Activated CD4-positive, alpha-beta memory T cell treated with anti-CD3 and anti-CD28 coated beads, Interleukin-2, amount 10 ng/mL, durations not matched to agents 7 days and 5 days (primary cell): ENCODE measurements at regions of chr14 and their contacts with region 1.

Region 1: GRCh38 chr14:76784266-76785264 is 23.3 kb downstream of the VASH1 start:
- DNase-seq: peak; percentile 62
- H3K4me3 Mint-ChIP-seq: no peak overlapping the region
- H3K27ac Mint-ChIP-seq: no peak overlapping the region
- H3K4me1 Mint-ChIP-seq: peaks cover 34% of the 10 kb centered on the region
- H3K27me3 Mint-ChIP-seq: no peaks in the 10 kb centered on the region

Region 2: GRCh38 chr14:76710056-76711010 is 74.2 kb before region 1 on chr14:
- CTCF ChIA-PET with region 1: interaction called, 60 read pairs
- POLR2A ChIA-PET with region 1: no interaction called
- DNase-seq: no peak
- H3K4me3 Mint-ChIP-seq: no peak overlapping the region
- H3K27ac Mint-ChIP-seq: no peak overlapping the region
- H3K4me1 Mint-ChIP-seq: no peaks in the 10 kb centered on the region
- H3K27me3 Mint-ChIP-seq: peaks cover 6% of the 10 kb centered on the region

Region 3: DNA sequence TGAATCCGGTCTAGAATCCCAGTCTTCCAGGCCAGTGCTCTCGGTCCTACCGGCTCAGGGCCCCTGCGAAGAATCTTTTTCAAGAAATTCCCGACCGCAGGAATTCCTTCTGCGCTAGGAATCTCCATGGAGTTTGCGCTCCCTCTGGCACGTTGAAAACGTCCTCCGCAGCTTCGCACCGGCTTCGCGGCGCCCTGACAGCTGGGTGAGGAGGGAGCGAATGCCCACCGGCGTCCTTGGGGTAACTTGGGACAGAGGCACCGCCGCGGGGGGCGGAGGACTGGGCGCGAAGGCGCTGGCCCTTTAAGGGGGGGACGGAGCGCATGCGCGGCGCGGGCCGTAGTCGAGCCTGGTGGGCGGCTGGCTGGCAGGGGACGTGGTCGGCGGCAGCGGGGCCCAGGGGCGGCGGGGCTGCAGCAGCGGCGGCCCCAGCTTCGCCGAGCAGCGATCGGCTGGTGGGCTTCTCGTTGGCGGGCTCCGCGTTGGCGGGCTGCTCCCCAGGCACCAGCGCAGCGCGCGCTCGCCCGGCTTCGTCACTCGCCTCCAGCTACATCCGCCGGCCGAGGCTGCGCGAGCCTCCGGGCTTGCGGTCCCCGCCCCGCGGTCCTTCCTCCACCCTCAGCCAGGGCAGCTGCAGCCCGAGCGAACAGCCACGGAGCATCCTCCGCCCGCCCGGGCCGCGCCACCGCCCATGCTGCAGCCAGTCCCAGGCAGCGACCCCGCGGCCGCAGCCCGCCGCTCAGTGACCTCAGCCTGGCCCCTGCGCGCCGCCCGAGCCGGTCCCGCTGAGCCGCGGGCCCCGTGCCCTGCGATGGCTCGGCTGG is 23.2 kb before region 1 on chr14 and contains the start of gene VASH1:
- CTCF ChIA-PET with region 1: interaction called, 11 read pairs
- POLR2A ChIA-PET with region 1: interaction called, 3 read pairs
- DNase-seq: peak; percentile 71
- H3K4me3 Mint-ChIP-seq: peak within 1 kb of the TSS; percentile 74
- H3K27ac Mint-ChIP-seq: no peak within 1 kb of the TSS
- H3K4me1 Mint-ChIP-seq: peaks cover 18% of the 10 kb centered on the region
- H3K27me3 Mint-ChIP-seq: peaks cover 55% of the 10 kb centered on the region
- total RNA-seq, gene VASH1: 2.5 to 2.6 TPM

Region 4: GRCh38 chr14:76767681-76768656 is 16.6 kb before region 1 on chr14:
- CTCF ChIA-PET with region 1: interaction called, 4 read pairs
- POLR2A ChIA-PET with region 1: interaction called, 17 read pairs
- DNase-seq: peak; percentile 83
- H3K4me3 Mint-ChIP-seq: peak overlapping the region; percentile 6
- H3K27ac Mint-ChIP-seq: peak overlapping the region; percentile 59
- H3K4me1 Mint-ChIP-seq: peaks cover 24% of the 10 kb centered on the region
- H3K27me3 Mint-ChIP-seq: peaks cover 20% of the 10 kb centered on the region

Region 5: GRCh38 chr14:76812211-76813044 is 27.9 kb after region 1 on chr14 and contains the start of gene ANGEL1:
- CTCF ChIA-PET with region 1: interaction called, 20 read pairs
- POLR2A ChIA-PET with region 1: interaction called, 9 read pairs
- DNase-seq: peak; percentile 98
- H3K4me3 Mint-ChIP-seq: peak within 1 kb of the TSS; percentile 90
- H3K27ac Mint-ChIP-seq: peak within 1 kb of the TSS; percentile 73
- H3K4me1 Mint-ChIP-seq: peaks cover 25% of the 10 kb centered on the region
- H3K27me3 Mint-ChIP-seq: no peaks in the 10 kb centered on the region
- total RNA-seq, gene ANGEL1: 9.9 to 11.0 TPM